Activated CD4-positive, alpha-beta T cell treated with anti-CD3 and anti-CD28 coated beads for 36 hours (primary cell): ENCODE measurements at regions of chr6 and their contacts with region 1.

Region 1: GRCh38 chr6:11460001-11460668 is 77.4 kb upstream of the TMEM170B start:
- DNase-seq: peak; percentile 19
- ATAC-seq: peak; percentile 70
- H3K4me3 Mint-ChIP-seq: peak overlapping the region; percentile 35
- H3K27ac Mint-ChIP-seq: peak overlapping the region; percentile 93
- H3K4me1 Mint-ChIP-seq: peaks cover 33% of the 10 kb centered on the region
- H3K27me3 Mint-ChIP-seq: peaks cover 4% of the 10 kb centered on the region

Region 2: DNA sequence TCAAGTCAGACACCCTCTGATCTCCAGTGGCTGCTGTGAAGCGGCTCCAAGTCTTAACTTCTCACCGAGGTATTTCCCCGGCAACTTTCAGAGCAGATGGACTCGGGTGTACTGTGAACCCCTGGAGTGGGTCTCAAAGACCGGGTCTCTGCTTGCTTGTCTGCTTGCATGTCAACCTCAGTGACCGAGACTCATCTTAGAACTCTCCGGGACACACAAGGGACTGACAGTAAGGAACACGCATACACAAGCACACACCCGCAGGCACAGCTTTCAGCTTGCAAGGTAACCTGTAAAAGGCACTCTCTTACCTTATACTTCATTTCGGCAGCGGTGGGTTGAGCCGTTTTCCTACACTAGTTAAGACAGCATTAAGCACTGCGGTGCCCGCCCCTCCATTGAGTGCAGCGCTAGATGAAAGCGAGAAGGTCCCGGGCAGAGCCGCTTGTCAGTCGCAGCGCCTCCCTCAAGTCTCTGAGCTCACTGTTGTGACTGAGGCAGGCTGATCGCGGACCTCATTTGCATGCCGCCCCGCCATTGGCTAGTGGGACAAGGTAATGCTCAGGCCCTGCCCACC is 227.9 kb before region 1 on chr6 and contains the start of gene NEDD9:
- CTCF ChIA-PET with region 1: no interaction called
- POLR2A ChIA-PET with region 1: interaction called, 6 read pairs
- intact Hi-C with region 1: loop called (anchors 2 kb)
- DNase-seq: peak; percentile 97
- ATAC-seq: peak; percentile 96
- H3K4me3 Mint-ChIP-seq: peak within 1 kb of the TSS; percentile 81
- H3K27ac Mint-ChIP-seq: peak within 1 kb of the TSS; percentile 95
- H3K4me1 Mint-ChIP-seq: peaks cover 65% of the 10 kb centered on the region
- H3K27me3 Mint-ChIP-seq: no peaks in the 10 kb centered on the region
- total RNA-seq, gene NEDD9: 23.6 to 27.3 TPM

Region 3: DNA sequence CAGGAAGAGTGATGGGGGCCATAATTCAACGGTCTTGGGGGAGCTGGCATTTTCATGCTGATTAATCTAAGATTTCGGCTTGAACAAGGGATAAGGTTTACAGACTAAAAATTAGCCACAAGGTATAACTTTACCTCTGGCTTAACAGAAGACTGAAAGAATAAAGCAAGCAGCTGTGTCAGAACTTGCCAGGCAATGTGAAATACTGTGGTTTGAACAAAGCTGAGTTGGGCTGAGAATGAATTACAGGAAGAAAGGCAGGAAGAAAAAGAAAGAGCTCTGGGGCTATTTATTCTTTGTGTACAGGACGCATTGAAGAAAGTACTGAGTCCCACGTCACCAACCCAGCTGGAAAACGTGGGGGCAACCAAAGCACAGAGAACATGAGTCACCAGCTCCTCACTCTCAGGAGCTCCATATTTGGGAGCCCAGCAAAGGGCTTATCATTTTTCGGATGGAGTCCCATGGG is 106.2 kb before region 1 on chr6:
- CTCF ChIA-PET with region 1: interaction called, 3 read pairs
- POLR2A ChIA-PET with region 1: interaction called, 10 read pairs
- intact Hi-C with region 1: no loop called
- DNase-seq: peak; percentile 90
- ATAC-seq: peak; percentile 92
- H3K4me3 Mint-ChIP-seq: peak overlapping the region; percentile 53
- H3K27ac Mint-ChIP-seq: peak overlapping the region; percentile 90
- H3K4me1 Mint-ChIP-seq: peaks cover 80% of the 10 kb centered on the region
- H3K27me3 Mint-ChIP-seq: no peaks in the 10 kb centered on the region

Region 4: DNA sequence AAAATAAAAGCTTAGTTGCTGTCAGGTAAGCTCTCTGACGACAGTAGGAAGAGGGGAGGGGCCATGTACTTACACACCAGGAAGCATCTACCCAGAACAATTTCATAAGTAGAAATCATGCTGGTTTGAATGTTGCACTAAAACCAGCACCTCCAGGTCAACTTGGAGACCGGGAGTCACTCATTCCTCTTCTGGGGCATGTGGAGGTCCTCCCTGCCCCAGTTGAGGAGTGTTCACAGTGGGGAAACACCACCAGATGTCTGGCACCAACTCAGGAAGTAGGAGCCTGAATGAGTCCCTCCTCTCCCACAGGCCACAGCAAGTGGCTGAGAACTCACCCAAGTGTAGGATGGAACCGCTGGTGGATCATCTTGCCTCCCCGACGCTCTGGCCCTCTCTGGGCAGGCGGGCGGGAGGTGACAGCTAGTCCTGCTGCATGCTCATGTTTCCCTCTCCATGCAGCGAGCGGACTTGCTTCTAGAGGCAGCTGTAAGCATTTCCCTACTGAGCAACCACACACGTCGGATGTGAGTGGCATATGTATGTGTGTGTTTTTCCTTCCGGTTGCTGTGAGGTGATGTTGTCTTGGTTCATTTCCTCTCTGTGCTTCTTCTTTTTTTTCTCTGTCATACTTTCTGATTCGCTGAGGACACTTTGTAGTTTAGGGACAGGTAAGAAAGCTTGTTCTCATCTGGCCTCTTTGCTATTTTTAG is 78.2 kb before region 1 on chr6:
- CTCF ChIA-PET with region 1: no interaction called
- POLR2A ChIA-PET with region 1: interaction called, 4 read pairs
- intact Hi-C with region 1: loop called in 1 of 2 experiments (anchors 2 kb)
- DNase-seq: peak; percentile 80
- ATAC-seq: peak; percentile 93
- H3K4me3 Mint-ChIP-seq: peak overlapping the region; percentile 78
- H3K27ac Mint-ChIP-seq: peak overlapping the region; percentile 88
- H3K4me1 Mint-ChIP-seq: peaks cover 56% of the 10 kb centered on the region
- H3K27me3 Mint-ChIP-seq: peaks cover 2% of the 10 kb centered on the region

Region 5: GRCh38 chr6:11424395-11425050 is 35.6 kb before region 1 on chr6:
- CTCF ChIA-PET with region 1: interaction called, 6 read pairs
- POLR2A ChIA-PET with region 1: interaction called, 3 read pairs
- intact Hi-C with region 1: loop called in 1 of 2 experiments (anchors 5 kb)
- DNase-seq: no peak
- ATAC-seq: no peak
- H3K4me3 Mint-ChIP-seq: no peak overlapping the region
- H3K27ac Mint-ChIP-seq: no peak overlapping the region
- H3K4me1 Mint-ChIP-seq: peaks cover 40% of the 10 kb centered on the region
- H3K27me3 Mint-ChIP-seq: no peaks in the 10 kb centered on the region

Region 6: GRCh38 chr6:11473008-11473740 is 13.0 kb after region 1 on chr6:
- CTCF ChIA-PET with region 1: no interaction called
- POLR2A ChIA-PET with region 1: no interaction called
- intact Hi-C with region 1: loop called in 1 of 2 experiments (anchors 1 kb)
- DNase-seq: no peak
- ATAC-seq: no peak
- H3K4me3 Mint-ChIP-seq: no peak overlapping the region
- H3K27ac Mint-ChIP-seq: no peak overlapping the region
- H3K4me1 Mint-ChIP-seq: no peaks in the 10 kb centered on the region
- H3K27me3 Mint-ChIP-seq: peaks cover 6% of the 10 kb centered on the region